Panc1 (cell line): ENCODE measurements at regions of chr14 and their contacts with region 1.

Region 1: GRCh38 chr14:61475316-61475715 is 153.9 kb downstream of the PRKCH start:
- DNase-seq: no peak
- ATAC-seq: no peak
- H3K4me3 ChIP-seq: no peak overlapping the region
- H3K27ac ChIP-seq: no peak overlapping the region
- H3K4me1 ChIP-seq: no peaks in the 10 kb centered on the region
- H3K27me3 ChIP-seq: no peaks in the 10 kb centered on the region
- CTCF ChIP-seq: peak; percentile 56; the same call in 1 of the 2 replicates

Region 2: DNA sequence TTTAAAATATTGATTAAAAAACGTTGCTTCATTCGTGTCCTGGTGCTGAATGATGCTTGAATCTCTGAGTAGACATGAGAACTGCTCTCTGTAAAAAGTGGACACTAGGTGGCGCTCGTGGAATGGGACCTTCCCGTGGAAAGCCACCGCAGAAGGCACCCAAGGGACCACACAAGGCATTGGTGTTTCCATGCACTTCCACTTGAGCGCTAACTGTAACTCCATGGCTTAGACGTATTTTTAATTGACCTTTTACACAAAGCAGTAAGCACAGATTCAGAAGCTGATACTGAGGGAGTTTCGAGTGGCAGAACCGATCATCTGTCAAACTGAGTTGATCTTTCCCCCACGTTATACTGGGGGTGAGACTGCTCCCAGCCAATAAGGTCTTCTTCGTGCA is 18.6 kb before region 1 on chr14:
- CTCF ChIA-PET with region 1: no interaction called
- POLR2A ChIA-PET with region 1: no interaction called
- in situ Hi-C with region 1: no loop called
- intact Hi-C with region 1: no loop called
- DNase-seq: no peak
- ATAC-seq: peak; percentile 91
- H3K4me3 ChIP-seq: no peak overlapping the region
- H3K27ac ChIP-seq: no peak overlapping the region
- H3K4me1 ChIP-seq: no peaks in the 10 kb centered on the region
- H3K27me3 ChIP-seq: no peaks in the 10 kb centered on the region
- CTCF ChIP-seq: peak; percentile 85

Region 3: GRCh38 chr14:61710853-61711817 is 235.8 kb after region 1 on chr14:
- CTCF ChIA-PET with region 1: no interaction called
- POLR2A ChIA-PET with region 1: no interaction called
- in situ Hi-C with region 1: no loop called
- intact Hi-C with region 1: loop called (anchors 10 kb)
- DNase-seq: no peak
- ATAC-seq: no peak
- H3K4me3 ChIP-seq: no peak overlapping the region
- H3K27ac ChIP-seq: no peak overlapping the region
- H3K4me1 ChIP-seq: peaks cover 9% of the 10 kb centered on the region
- H3K27me3 ChIP-seq: no peaks in the 10 kb centered on the region
- CTCF ChIP-seq: no peak